Gastrocnemius medialis (tissue), 4 donors: ENCODE measurements at regions of chr6 and their contacts with region 1.

Region 1: DNA sequence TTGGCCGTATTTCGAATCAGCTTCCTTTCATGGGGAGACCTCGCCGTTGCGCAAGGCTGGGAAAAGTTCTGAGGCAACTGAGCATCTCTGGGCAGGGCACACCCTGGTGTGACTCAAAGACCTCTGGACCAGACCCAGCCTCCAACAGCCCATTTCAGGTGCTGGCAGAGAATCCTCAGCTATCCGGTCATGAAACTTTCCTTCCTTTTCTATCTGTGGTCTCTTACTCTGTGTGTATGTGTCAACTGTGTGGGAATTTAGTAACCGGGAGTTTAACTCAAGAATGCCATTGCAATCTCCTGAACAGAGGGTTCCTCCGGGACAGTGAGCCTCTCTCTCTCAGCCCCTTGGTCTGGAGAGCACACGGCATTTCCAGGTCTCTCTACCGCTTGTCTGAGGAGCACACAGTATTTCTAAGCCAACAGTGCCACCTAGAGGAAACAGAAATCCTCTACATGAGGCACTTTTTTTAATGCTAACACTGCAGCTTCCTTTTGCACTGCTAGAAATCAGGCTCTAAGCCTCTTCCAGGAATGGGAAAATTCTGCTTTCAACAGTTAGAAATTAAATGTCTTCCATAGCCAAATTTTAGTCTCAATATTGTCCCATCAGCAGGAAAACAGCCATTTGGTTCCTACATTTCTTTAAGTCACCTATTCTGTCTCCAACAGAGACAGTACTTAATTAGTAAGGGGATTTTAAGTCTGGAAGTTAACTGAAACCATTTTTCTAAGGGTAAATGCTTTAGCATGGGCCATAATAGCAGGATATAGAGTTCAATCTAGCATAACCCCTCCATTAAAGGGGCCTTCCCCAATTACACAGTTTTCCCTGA is 32.7 kb downstream of the PLN start:
- DNase-seq: peak; percentile 71 to 86
- ATAC-seq: peak; percentile 86 to 92
- H3K4me3 ChIP-seq: peak overlapping the region; percentile 8 to 29 (median 24)
- H3K27ac ChIP-seq: peak overlapping the region; percentile 81 to 85 (median 84)
- H3K4me1 ChIP-seq: peaks cover 42 to 46% of the 10 kb centered on the region in 2 donors
- H3K27me3 ChIP-seq: no peaks in the 10 kb centered on the region
- CTCF ChIP-seq: peak; percentile 72 to 84 (median 80)
- POLR2A ChIP-seq: no peak

Region 2: DNA sequence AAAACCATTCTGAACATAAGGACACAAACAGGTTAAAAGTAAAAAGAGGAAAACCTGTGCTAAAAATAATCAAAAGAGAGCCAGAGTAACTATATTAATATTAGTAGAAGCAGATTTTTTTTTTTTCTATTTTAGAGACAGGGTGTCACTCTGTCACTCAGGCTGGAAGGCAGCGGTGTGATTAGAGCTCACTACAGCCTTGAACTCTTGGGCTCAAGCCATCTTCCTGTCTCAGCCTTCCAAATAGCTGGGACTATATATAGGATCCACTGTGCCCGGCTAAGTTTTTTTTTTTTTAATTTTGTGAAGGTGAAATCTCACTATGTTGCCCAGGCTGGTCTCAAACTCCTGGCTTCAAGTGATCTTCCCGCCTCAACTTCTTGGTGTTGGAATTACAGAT is 66.1 kb before region 1 on chr6:
- in situ Hi-C with region 1: no loop called
- intact Hi-C with region 1: loop called (anchors 2 kb)
- DNase-seq: peak; percentile 66 to 77
- ATAC-seq: peak; percentile 98 to 99
- H3K4me3 ChIP-seq: no peak overlapping the region
- H3K27ac ChIP-seq: peak overlapping the region; percentile 71 to 82 (median 76)
- H3K4me1 ChIP-seq: peaks cover 36 to 52% of the 10 kb centered on the region in 2 donors
- H3K27me3 ChIP-seq: no peaks in the 10 kb centered on the region
- CTCF ChIP-seq: no peak
- POLR2A ChIP-seq: no peak

Region 3: DNA sequence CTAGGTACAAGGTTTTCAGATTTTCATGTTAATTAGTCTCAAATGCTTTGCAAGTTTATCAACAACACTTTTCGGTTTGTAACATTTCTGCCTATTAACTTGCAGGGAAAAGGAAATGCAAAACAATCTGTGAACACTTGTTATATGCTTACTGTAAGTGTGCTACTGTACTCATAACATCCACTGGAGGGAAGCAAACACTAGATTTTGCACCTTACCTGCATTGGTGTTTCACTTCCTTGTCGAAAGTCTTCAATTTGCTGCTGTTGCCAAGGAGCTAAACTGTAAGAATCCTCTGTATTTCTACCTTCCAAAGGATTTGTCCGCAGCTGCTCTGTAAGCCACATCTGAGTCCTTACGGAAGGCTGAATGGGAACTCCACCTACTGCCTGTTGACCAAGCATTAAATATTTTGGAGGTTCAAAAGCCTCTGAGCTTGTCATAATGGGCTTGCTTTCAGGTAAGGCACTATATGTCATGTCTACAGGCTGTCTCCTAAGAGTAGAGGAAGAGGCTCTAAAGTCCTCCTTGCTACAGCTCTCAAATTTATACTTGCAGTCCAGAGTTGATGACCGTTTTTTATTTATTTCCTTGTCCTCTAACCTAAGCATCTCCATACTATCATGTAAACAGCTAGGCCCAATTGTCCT is 15.4 kb before region 1 on chr6:
- in situ Hi-C with region 1: no loop called
- intact Hi-C with region 1: loop called (anchors 2 kb)
- DNase-seq: no peak
- ATAC-seq: peak in 1 of 2 donors; percentile 62
- H3K4me3 ChIP-seq: no peak overlapping the region
- H3K27ac ChIP-seq: peak overlapping the region; percentile 38 to 95 (median 46)
- H3K4me1 ChIP-seq: peaks cover 27 to 39% of the 10 kb centered on the region in 2 donors
- H3K27me3 ChIP-seq: no peaks in the 10 kb centered on the region
- CTCF ChIP-seq: peak in 4 of 5 experiments; percentile 33 to 48 (median 45)
- POLR2A ChIP-seq: no peak